ENCODE measurements at regions of chr1 and their contacts with region 1.

Region 1: DNA sequence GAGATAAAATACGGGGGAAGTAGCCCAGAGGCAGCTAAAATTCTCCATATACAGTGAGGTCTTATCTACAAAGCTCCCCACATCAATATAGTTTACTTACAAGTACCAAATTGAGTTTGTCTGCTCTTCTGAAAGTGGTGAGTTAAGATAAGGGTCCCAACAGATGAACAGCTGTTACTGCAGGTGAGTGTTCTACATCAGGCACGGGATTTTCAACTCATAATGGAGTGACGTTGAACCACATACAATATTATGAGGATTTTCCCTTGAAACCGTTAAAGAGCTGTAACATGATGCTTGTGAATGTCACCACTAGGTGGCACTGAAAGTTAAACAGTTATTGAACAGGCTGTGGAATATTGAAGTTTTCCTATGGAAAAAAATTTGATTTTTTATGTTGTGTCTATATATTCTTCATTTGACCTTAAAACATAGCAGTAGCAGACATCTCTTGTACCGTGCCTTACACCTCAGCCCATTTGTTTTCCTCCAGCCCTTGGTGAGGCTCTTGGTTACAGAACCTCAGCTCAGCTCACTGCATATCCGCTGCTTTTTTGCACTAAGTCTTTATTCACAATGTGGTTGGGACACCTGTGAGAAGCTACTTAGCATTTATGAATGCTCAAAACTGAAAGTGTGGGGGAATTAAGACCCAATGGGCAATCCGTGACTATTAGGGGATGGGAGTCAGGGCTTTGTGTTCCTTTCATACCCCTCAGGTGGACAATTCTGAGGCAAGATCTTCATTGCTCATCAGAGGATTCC is 23.2 kb downstream of the CD1D start:
- DNase-seq: peak; percentile 84
- H3K4me3 Mint-ChIP-seq: no peak overlapping the region
- H3K27ac Mint-ChIP-seq: no peak overlapping the region
- H3K4me1 Mint-ChIP-seq: no peaks in the 10 kb centered on the region
- H3K27me3 Mint-ChIP-seq: peaks cover 81% of the 10 kb centered on the region
- CTCF ChIP-seq: peak; percentile 83

Region 2: DNA sequence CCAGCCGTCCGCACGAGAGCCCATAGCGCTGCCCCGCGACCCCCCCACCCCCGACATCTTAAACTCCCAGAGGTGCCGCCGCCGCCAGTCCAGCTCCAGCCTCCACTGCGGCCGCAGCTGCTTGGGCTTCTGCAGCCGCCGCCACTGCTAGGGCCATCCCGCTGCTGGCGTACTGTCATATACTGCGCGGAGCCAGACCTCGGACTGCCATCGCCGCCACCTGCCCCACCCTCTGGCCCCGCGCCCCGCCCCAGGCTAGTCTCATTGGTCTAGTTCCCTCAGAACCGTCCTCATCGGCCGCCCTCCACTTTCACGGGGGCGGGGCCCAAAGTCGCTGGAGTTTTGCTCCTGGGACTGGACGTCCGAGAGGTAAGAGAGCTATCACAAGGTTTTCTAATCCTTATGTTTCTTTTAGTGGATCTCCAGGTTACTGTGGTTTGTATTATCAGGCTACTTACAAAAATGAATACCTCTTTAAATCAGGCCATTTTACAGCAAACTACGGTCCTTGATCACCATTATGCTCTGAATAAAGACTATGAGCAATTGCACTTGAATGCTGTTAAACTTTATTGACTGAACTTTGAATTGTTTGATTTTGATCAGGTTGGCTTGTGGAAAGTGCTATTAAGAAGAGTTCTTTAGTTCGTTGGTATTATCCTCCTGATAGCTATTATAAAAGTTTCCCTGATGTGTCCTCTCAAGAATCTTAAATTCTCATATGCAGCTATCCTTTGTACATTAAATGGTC is 26.0 kb before region 1 on chr1:
- CTCF ChIA-PET with region 1: interaction called, 17 read pairs
- POLR2A ChIA-PET with region 1: interaction called, 4 read pairs
- intact Hi-C with region 1: no loop called
- DNase-seq: no peak
- H3K4me3 Mint-ChIP-seq: no peak overlapping the region
- H3K27ac Mint-ChIP-seq: no peak overlapping the region
- H3K4me1 Mint-ChIP-seq: peaks cover 9% of the 10 kb centered on the region
- H3K27me3 Mint-ChIP-seq: peaks cover 37% of the 10 kb centered on the region
- CTCF ChIP-seq: no peak

Region 3: GRCh38 chr1:158227904-158228623 is 24.2 kb after region 1 on chr1:
- CTCF ChIA-PET with region 1: interaction called, 16 read pairs
- POLR2A ChIA-PET with region 1: no interaction called
- intact Hi-C with region 1: no loop called
- DNase-seq: no peak
- H3K4me3 Mint-ChIP-seq: no peak overlapping the region
- H3K27ac Mint-ChIP-seq: no peak overlapping the region
- H3K4me1 Mint-ChIP-seq: no peaks in the 10 kb centered on the region
- H3K27me3 Mint-ChIP-seq: peaks cover 57% of the 10 kb centered on the region
- CTCF ChIP-seq: no peak

Region 4: DNA sequence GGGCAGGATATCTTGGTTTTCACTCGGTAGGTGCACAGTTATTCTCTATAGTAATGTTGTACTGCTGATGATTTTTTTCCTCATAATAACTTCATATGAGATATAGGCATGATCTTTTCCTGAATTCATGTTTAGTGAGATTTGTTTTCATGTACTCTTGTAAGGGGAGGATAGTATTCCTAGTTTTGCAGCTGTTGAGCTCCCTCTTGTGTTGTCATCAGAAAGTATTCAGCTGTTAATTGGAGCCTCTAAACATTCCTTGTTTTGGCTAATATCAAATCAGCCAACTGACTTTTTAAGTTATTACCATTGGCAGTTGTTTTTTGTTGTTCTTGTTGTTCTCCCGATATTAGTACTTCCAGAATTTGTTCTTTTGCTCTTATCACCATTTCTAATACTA is 292.5 kb after region 1 on chr1:
- CTCF ChIA-PET with region 1: interaction called, 3 read pairs
- POLR2A ChIA-PET with region 1: no interaction called
- intact Hi-C with region 1: loop called (anchors 5 kb)
- DNase-seq: peak; percentile 47
- H3K4me3 Mint-ChIP-seq: no peak overlapping the region
- H3K27ac Mint-ChIP-seq: no peak overlapping the region
- H3K4me1 Mint-ChIP-seq: no peaks in the 10 kb centered on the region
- H3K27me3 Mint-ChIP-seq: peaks cover 74% of the 10 kb centered on the region
- CTCF ChIP-seq: peak; percentile 25

Region 5: DNA sequence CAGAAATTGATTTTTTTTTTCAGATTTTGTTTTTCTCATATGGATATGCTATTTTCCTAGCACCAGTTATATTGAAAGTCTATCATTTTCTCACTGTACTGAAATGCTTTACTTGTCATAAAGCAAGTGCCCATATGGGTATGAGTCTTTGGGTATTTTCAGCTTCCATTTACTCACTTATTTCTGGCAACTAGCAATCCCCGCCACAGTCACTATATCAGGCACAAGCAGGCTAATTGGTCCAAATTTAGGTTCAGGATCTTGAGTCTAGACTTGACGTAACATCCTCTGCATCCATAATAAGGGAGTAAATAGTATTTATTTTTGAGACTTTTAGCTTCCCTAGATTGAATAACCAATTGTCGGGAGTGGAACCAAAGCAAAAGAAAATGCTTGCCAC is 373.7 kb after region 1 on chr1:
- CTCF ChIA-PET with region 1: no interaction called
- POLR2A ChIA-PET with region 1: no interaction called
- intact Hi-C with region 1: no loop called
- DNase-seq: no peak
- H3K4me3 Mint-ChIP-seq: no peak overlapping the region
- H3K27ac Mint-ChIP-seq: no peak overlapping the region
- H3K4me1 Mint-ChIP-seq: no peaks in the 10 kb centered on the region
- H3K27me3 Mint-ChIP-seq: peaks cover 41% of the 10 kb centered on the region
- CTCF ChIP-seq: no peak

Region 6: GRCh38 chr1:158998781-158999161 is 794.9 kb after region 1 on chr1:
- CTCF ChIA-PET with region 1: interaction called, 32 read pairs
- POLR2A ChIA-PET with region 1: interaction called, 6 read pairs
- intact Hi-C with region 1: loop called (anchors 1 kb)
- DNase-seq: peak; percentile 81
- H3K4me3 Mint-ChIP-seq: peak overlapping the region; percentile 65
- H3K27ac Mint-ChIP-seq: peak overlapping the region; percentile 63
- H3K4me1 Mint-ChIP-seq: peaks cover 22% of the 10 kb centered on the region
- H3K27me3 Mint-ChIP-seq: no peaks in the 10 kb centered on the region
- CTCF ChIP-seq: peak; percentile 95